PC-9 (cell line): ENCODE measurements at regions of chr3 and their contacts with region 1.

Region 1: DNA sequence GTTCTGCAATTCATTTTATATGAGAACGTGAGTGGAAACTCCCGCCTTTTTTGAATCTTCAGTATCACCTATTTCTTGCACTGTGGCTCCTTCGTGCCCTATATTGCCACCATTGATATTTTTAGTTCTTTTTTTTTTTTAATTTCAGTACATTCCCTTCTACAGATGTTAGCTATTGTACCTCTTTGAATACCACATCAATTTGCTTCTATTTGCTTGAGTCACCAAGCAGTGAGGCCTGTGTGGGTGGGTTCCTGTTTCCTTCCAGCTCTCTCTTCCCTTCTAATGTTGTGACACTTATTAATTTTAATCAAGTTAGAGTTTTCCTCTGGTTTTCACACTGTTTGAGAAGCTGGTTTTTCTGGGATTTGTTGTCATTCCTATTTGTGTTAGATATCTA is 8.7 kb downstream of the HACD2 start:
- DNase-seq: no peak
- H3K4me3 ChIP-seq: no peak overlapping the region
- H3K27ac ChIP-seq: 0 out of 2 replicates have a peak overlapping the region, but pooled peaks have one; percentile 11
- H3K4me1 ChIP-seq: no peaks in the 10 kb centered on the region
- H3K27me3 ChIP-seq: no peaks in the 10 kb centered on the region
- CTCF ChIP-seq: no peak

Region 2: GRCh38 chr3:123688241-123688747 is 112.2 kb after region 1 on chr3:
- CTCF ChIA-PET with region 1: no interaction called
- POLR2A ChIA-PET with region 1: interaction called, 11 read pairs
- intact Hi-C with region 1: no loop called
- DNase-seq: peak; percentile 29 to 80
- H3K4me3 ChIP-seq: no peak overlapping the region
- H3K27ac ChIP-seq: 0 out of 2 replicates have a peak overlapping the region, but pooled peaks have one; percentile 27
- H3K4me1 ChIP-seq: peaks cover 15% of the 10 kb centered on the region
- H3K27me3 ChIP-seq: no peaks in the 10 kb centered on the region
- CTCF ChIP-seq: no peak

Region 3: DNA sequence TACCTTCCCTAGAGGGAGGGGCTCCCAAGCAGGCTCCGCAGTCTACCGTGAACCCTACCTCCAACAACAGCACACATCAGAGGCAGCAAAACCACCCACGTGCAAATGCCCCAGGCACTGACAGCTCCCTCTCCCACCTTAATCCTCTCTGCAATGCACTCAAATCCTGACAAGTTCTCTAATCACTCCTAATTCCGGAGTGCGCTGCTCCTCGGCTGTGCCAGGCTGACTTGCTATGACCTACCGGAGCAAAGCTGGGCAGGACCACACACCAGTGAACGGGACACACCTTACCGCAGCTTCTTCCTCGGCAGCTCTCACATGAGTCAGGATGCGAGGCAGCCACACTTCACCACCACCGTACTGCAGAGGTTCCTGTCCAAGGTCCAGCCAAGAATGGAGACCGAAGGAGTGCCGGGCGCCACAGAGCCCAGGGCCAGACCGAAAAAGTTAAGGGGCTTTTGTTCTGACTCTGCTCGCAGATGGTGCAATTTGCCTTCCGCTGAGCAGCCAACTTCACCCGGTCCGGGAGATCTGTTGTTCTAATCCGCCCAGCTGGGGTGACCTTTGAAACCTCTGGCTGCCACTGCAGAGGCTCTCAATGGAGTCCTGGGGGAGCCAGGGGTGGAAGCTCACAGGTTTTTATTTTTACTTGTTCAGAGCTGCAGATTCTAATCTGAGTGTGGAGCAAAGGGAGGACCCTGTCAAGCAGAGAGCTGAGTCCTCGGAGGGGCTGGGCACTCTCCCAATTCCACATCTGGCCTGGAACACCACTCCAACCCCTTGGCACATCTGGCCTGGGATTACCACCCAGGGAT is 223.6 kb after region 1 on chr3:
- CTCF ChIA-PET with region 1: no interaction called
- POLR2A ChIA-PET with region 1: no interaction called
- intact Hi-C with region 1: no loop called
- DNase-seq: peak in 1 of 2 experiments; percentile 26
- H3K4me3 ChIP-seq: no peak overlapping the region
- H3K27ac ChIP-seq: no peak overlapping the region
- H3K4me1 ChIP-seq: no peaks in the 10 kb centered on the region
- H3K27me3 ChIP-seq: no peaks in the 10 kb centered on the region
- CTCF ChIP-seq: no peak